CD8-positive, alpha-beta T cell (primary cell): ENCODE measurements at regions of chr3 and their contacts with region 1.

Region 1: DNA sequence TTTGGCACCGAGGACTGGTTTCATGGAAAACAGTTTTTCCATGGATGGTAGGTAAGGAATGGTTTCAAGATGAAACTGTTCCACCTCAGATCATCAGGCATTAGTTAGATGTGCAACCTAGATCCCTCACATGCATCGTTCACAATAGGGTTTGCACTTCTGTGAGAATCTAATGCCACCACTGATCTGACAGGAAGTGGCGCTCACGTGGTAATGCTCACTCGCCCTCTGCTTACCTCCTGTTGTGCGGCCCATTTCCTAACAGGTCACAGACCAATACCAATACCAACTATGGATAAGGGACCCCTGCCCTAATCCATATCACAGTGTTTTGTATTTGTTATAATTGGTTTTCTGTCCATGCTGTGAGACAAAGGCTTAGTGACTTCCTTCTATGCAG is 58.9 kb downstream of the SLMAP start:
- DNase-seq: peak in 8 of 9 experiments; percentile 30 to 72 (median 46)
- ATAC-seq: peak; percentile 78
- H3K4me3 ChIP-seq: no peak overlapping the region
- H3K4me3 Mint-ChIP-seq: peak overlapping the region; percentile 64
- H3K27ac ChIP-seq: peak overlapping the region in 1 of 2 experiments; percentile 66
- H3K27ac Mint-ChIP-seq: peak overlapping the region; percentile 85
- H3K4me1 ChIP-seq: peaks cover 28% of the 10 kb centered on the region
- H3K4me1 Mint-ChIP-seq: peaks cover 51% of the 10 kb centered on the region
- H3K27me3 ChIP-seq: no peaks in the 10 kb centered on the region
- H3K27me3 Mint-ChIP-seq: no peaks in the 10 kb centered on the region
- CTCF ChIP-seq: no peak

Region 2: GRCh38 chr3:57764794-57765193 is 50.2 kb before region 1 on chr3:
- CTCF ChIA-PET with region 1: no interaction called
- POLR2A ChIA-PET with region 1: no interaction called
- intact Hi-C with region 1: loop called in 1 of 2 experiments (anchors 5 kb)
- DNase-seq: no peak
- ATAC-seq: no peak
- H3K4me3 ChIP-seq: no peak overlapping the region
- H3K4me3 Mint-ChIP-seq: peak overlapping the region; percentile 6
- H3K27ac ChIP-seq: no peak overlapping the region
- H3K27ac Mint-ChIP-seq: no peak overlapping the region
- H3K4me1 ChIP-seq: peaks cover 51% of the 10 kb centered on the region
- H3K4me1 Mint-ChIP-seq: peaks cover 70% of the 10 kb centered on the region
- H3K27me3 ChIP-seq: no peaks in the 10 kb centered on the region
- H3K27me3 Mint-ChIP-seq: no peaks in the 10 kb centered on the region
- CTCF ChIP-seq: no peak